Naive thymus-derived CD8-positive, alpha-beta T cell (primary cell): ENCODE measurements at regions of chr17 and their contacts with region 1.

Region 1: GRCh38 chr17:42276359-42276608 is at the start of gene STAT5B:
- DNase-seq: peak in 9 of 10 donors; percentile 51 to 83 (median 69)
- ATAC-seq: peak; percentile 53 to 57
- H3K4me3 Mint-ChIP-seq: peak within 1 kb of the TSS; percentile 86 to 100 (median 96)
- H3K27ac Mint-ChIP-seq: peak within 1 kb of the TSS; percentile 94 to 98 (median 96)
- H3K4me1 Mint-ChIP-seq: peaks cover 31 to 59% (median 52%) of the 10 kb centered on the region in 4 donors
- H3K27me3 Mint-ChIP-seq: no peaks in the 10 kb centered on the region
- polyA plus RNA-seq, gene STAT5B: 66.3 to 94.0 (median 82.8) TPM

Region 2: DNA sequence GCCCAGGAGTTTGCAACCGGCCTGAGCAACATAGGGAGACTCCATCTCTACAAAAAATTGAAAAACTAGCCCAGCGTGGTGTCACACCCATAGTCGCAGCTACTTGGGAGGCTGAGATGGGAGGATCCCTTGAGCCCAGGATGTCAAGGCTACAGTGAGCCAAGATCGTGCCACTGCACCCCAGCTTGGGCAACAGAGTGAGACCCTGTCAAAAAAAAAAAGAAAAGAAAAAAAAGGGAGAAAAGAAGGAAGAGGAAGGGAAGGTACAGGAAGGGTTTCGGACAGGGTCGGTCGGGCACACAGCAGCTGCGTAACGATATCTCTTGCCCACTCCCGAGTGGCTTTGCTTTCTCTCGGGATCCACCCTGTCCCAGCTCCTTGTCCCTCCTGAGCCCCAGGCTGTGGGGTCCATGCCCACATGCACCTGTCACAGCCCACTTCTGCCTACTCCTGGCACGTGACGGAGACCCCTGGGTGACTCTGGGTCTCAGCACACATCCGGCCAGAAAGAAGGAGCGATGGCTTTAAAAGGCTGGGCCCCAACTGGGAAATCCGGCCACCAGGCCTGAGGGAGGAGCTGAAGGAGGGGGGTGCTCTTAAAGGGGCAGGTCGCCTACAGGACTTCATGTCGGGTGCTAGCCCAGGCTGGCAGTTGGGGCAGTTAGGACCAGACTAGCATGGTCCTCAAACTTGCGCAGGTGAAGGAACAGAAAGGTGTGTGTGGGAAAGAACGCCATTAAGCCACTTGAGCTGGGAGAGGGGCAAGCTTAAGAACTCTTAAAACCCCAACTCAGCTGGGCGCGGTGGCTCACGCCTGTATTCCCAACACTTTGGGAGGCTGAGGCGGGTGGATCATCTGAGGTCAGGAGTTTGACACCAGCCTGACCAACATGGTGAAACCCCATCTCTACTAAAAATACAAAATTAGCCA is 82.0 kb before region 1 on chr17 and contains the start of gene GHDC:
- POLR2A ChIA-PET with region 1: interaction called, 13 read pairs
- DNase-seq: peak; percentile 57 to 88 (median 74)
- ATAC-seq: peak; percentile 96 to 98
- H3K4me3 Mint-ChIP-seq: peak within 1 kb of the TSS; percentile 86 to 99 (median 96)
- H3K27ac Mint-ChIP-seq: peak within 1 kb of the TSS; percentile 84 to 96 (median 94)
- H3K4me1 Mint-ChIP-seq: peaks cover 16 to 35% (median 30%) of the 10 kb centered on the region in 4 donors
- H3K27me3 Mint-ChIP-seq: no peaks in the 10 kb centered on the region
- polyA plus RNA-seq, gene GHDC: 15.3 to 21.5 (median 17.3) TPM

Region 3: DNA sequence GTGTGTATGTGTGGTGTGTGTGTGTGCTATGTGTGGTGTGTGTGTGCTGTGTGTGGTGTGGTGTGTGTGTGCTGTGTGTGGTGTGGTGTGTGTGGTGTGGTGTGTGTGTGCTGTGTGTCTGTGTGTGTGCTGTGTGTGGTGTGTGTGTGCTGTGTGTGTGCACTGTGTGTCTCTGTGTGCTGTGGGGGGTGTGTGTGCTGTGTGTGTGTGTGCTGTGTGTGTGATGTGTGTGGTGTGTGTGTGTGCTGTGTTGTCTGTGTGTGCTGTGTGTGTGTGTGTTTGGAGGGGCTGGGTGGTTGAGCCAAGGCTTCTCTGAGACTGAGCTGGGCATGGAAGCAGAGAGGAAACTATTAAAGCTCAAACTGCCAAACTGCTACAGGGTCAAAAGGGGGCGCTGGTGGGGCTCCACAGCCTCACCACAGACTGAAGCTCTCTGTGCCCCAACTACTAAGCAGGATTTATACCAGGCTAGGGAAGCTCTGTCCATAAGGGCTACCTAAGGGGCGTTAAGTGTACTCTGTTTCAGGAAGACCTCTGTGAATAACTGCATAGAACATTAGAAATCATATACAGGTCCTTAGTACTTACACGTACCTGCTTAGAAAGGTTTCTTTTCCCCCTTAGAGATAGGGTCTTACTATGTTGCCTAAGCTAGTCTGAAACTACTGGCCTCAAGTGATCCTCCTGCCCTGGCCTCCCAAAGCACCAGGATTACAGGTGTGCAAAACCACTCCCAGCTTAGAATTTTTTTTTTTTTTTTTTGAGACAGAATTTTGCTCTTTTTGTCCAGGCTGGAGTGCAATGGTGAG is 54.1 kb before region 1 on chr17:
- POLR2A ChIA-PET with region 1: interaction called, 11 read pairs
- DNase-seq: peak; percentile 31 to 74 (median 56)
- ATAC-seq: peak; percentile 94 to 95
- H3K4me3 Mint-ChIP-seq: no peak overlapping the region
- H3K27ac Mint-ChIP-seq: peak overlapping the region in 7 of 10 donors; percentile 14 to 86 (median 42)
- H3K4me1 Mint-ChIP-seq: peaks cover 2 to 9% (median 6%) of the 10 kb centered on the region in 4 donors
- H3K27me3 Mint-ChIP-seq: no peaks in the 10 kb centered on the region

Region 4: GRCh38 chr17:42312285-42313130 is 36.2 kb after region 1 on chr17:
- POLR2A ChIA-PET with region 1: interaction called, 30 read pairs
- DNase-seq: peak; percentile 66 to 87 (median 74)
- ATAC-seq: peak; percentile 72 to 73
- H3K4me3 Mint-ChIP-seq: peak overlapping the region; percentile 61 to 86 (median 74)
- H3K27ac Mint-ChIP-seq: peak overlapping the region; percentile 84 to 93 (median 90)
- H3K4me1 Mint-ChIP-seq: peaks cover 32 to 80% (median 66%) of the 10 kb centered on the region in 4 donors
- H3K27me3 Mint-ChIP-seq: no peaks in the 10 kb centered on the region